ENCODE measurements at regions of chr6 and their contacts with region 1.

Region 1: DNA sequence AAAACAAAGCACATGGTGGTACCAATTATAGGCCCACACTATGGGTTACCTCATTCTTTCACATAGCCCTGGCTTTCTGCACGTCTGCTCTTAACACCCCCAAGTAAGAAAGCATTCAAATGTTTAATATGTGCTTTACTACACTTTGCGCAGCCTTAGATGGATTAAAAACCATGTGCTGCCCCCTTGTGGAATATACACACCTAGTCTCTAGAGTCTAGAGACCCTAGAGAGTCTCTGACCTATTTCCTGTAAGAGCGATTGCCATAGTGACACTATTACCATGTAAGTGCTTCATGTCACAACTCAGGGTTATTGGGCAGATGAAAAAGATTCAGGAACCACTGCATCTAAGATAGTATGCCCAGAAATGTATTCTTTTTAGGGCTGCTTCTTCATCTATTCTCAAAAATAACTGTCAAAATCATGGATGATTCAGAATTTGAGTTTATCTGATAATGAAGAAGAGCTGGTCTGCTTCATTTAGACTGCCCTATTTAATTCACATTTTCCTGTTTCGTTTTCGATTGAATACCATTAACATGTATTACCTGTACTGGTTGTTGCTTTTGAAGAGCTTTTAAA is 186.3 kb downstream of the ADGB start:
- DNase-seq: peak; percentile 41
- ATAC-seq: peak; percentile 88
- H3K4me3 ChIP-seq: no peak overlapping the region
- H3K27ac ChIP-seq: no peak overlapping the region
- H3K4me1 ChIP-seq: no peaks in the 10 kb centered on the region
- H3K27me3 ChIP-seq: no peaks in the 10 kb centered on the region
- CTCF ChIP-seq: peak; percentile 46
- POLR2A ChIP-seq: no peak
- RAD21 ChIP-seq: peak; percentile 33; the same call in 1 of the 2 replicates

Region 2: GRCh38 chr6:145929037-145929633 is 856.0 kb before region 1 on chr6:
- CTCF ChIA-PET with region 1: interaction called, 6 read pairs
- POLR2A ChIA-PET with region 1: no interaction called
- dilution Hi-C with region 1: no loop called
- in situ Hi-C with region 1: no loop called
- intact Hi-C with region 1: loop called (anchors 10 kb)
- DNase-seq: peak; percentile 60
- ATAC-seq: peak; percentile 21; the same call in 1 of the 2 replicates
- H3K4me3 ChIP-seq: no peak overlapping the region
- H3K27ac ChIP-seq: no peak overlapping the region
- H3K4me1 ChIP-seq: no peaks in the 10 kb centered on the region
- H3K27me3 ChIP-seq: no peaks in the 10 kb centered on the region
- CTCF ChIP-seq: peak; percentile 64
- POLR2A ChIP-seq: no peak
- RAD21 ChIP-seq: peak; percentile 54

Region 3: DNA sequence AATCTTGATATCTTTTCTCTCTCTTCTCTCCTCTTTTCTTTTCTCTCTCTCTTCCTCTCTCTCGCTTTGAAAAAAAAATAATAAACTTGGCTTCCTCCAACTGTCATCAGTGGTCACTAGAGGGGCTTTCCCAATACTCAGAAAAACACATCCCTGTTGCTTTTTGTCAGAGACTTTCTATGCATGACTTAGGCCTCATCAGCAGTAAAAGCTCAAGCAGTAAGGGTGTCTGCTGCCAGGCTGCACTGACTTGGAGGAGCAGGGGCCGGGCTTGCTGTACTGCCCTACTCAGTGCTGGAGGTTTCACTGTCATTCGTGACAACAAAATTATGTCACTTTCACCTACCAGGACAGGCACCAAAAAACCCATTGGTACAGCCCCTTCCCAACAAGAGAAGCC is 85.7 kb after region 1 on chr6:
- CTCF ChIA-PET with region 1: no interaction called
- POLR2A ChIA-PET with region 1: no interaction called
- dilution Hi-C with region 1: no loop called
- in situ Hi-C with region 1: no loop called
- intact Hi-C with region 1: no loop called
- DNase-seq: no peak
- ATAC-seq: no peak
- H3K4me3 ChIP-seq: no peak overlapping the region
- H3K27ac ChIP-seq: no peak overlapping the region
- H3K4me1 ChIP-seq: no peaks in the 10 kb centered on the region
- H3K27me3 ChIP-seq: no peaks in the 10 kb centered on the region
- CTCF ChIP-seq: no peak
- POLR2A ChIP-seq: no peak
- RAD21 ChIP-seq: no peak

Region 4: GRCh38 chr6:146974351-146974750 is 189.3 kb after region 1 on chr6:
- CTCF ChIA-PET with region 1: no interaction called
- POLR2A ChIA-PET with region 1: no interaction called
- dilution Hi-C with region 1: no loop called
- in situ Hi-C with region 1: no loop called
- intact Hi-C with region 1: no loop called
- DNase-seq: no peak
- ATAC-seq: no peak
- H3K4me3 ChIP-seq: no peak overlapping the region
- H3K27ac ChIP-seq: no peak overlapping the region
- H3K4me1 ChIP-seq: no peaks in the 10 kb centered on the region
- H3K27me3 ChIP-seq: no peaks in the 10 kb centered on the region
- CTCF ChIP-seq: no peak
- POLR2A ChIP-seq: no peak
- RAD21 ChIP-seq: no peak